T-cell (primary cell): ENCODE measurements at regions of chr22 and their contacts with region 1.

Region 1: GRCh38 chr22:43088979-43089717 is at the start of gene TTLL1:
- DNase-seq: peak; percentile 74 to 92 (median 85)
- ATAC-seq: peak; percentile 97 to 98 (median 97)
- H3K4me3 ChIP-seq: peak within 1 kb of the TSS; percentile 69 to 74
- H3K4me3 Mint-ChIP-seq: peak within 1 kb of the TSS; percentile 86 to 92 (median 89)
- H3K27ac ChIP-seq: peak within 1 kb of the TSS; percentile 61
- H3K27ac Mint-ChIP-seq: peak within 1 kb of the TSS; percentile 87 to 90
- H3K4me1 ChIP-seq: peaks cover 5 to 35% of the 10 kb centered on the region in 2 experiments
- H3K4me1 Mint-ChIP-seq: peaks cover 17 to 23% (median 19%) of the 10 kb centered on the region in 3 donors
- H3K27me3 ChIP-seq: no peaks in the 10 kb centered on the region
- H3K27me3 Mint-ChIP-seq: no peaks in the 10 kb centered on the region
- total RNA-seq, gene TTLL1: 5.6 to 9.0 (median 6.9) TPM

Region 2: DNA sequence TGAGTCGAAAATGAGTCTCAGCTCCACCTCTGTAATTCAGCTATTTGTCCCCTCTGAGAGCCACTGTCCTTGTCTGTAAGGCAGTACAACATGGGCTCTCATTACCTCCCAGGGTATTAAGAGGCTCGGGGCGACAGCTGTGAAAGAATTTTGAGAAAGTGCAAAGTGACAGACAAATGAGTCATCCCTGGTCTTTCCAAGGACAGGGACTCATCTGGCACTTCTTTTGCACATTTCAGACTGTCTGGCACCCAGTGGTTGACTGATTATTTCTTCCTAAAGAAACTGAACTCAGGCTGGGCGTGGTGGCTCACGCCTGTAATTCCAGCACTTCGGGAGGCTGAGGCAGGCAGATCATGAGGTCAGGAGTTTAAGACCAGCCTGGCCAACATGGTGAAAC is 169.9 kb before region 1 on chr22:
- CTCF ChIA-PET with region 1: no interaction called
- POLR2A ChIA-PET with region 1: no interaction called
- DNase-seq: no peak
- ATAC-seq: no peak
- H3K4me3 ChIP-seq: no peak overlapping the region
- H3K4me3 Mint-ChIP-seq: no peak overlapping the region
- H3K27ac ChIP-seq: no peak overlapping the region
- H3K27ac Mint-ChIP-seq: no peak overlapping the region
- H3K4me1 ChIP-seq: peaks cover 2 to 19% of the 10 kb centered on the region in 2 experiments
- H3K4me1 Mint-ChIP-seq: peaks cover 28 to 45% (median 44%) of the 10 kb centered on the region in 3 donors
- H3K27me3 ChIP-seq: no peaks in the 10 kb centered on the region
- H3K27me3 Mint-ChIP-seq: no peaks in the 10 kb centered on the region

Region 3: GRCh38 chr22:43151251-43152002 is 62.3 kb after region 1 on chr22 and contains the start of gene TSPO:
- CTCF ChIA-PET with region 1: no interaction called
- POLR2A ChIA-PET with region 1: interaction called in 1 of 2 experiments, 15 read pairs
- DNase-seq: peak in 32 of 35 experiments; percentile 20 to 68 (median 43)
- ATAC-seq: peak; percentile 66 to 69 (median 68)
- H3K4me3 ChIP-seq: peak within 1 kb of the TSS; percentile 64 to 86
- H3K4me3 Mint-ChIP-seq: peak within 1 kb of the TSS; percentile 90 to 93 (median 92)
- H3K27ac ChIP-seq: peak within 1 kb of the TSS; percentile 64
- H3K27ac Mint-ChIP-seq: peak within 1 kb of the TSS; percentile 94 to 96
- H3K4me1 ChIP-seq: peaks cover 2 to 30% of the 10 kb centered on the region in 2 experiments
- H3K4me1 Mint-ChIP-seq: peaks cover 25 to 40% (median 31%) of the 10 kb centered on the region in 3 donors
- H3K27me3 ChIP-seq: no peaks in the 10 kb centered on the region
- H3K27me3 Mint-ChIP-seq: no peaks in the 10 kb centered on the region
- total RNA-seq, gene TSPO: 50.2 to 128 (median 101) TPM